ENCODE measurements at regions of chr2 and their contacts with region 1.

Region 1: DNA sequence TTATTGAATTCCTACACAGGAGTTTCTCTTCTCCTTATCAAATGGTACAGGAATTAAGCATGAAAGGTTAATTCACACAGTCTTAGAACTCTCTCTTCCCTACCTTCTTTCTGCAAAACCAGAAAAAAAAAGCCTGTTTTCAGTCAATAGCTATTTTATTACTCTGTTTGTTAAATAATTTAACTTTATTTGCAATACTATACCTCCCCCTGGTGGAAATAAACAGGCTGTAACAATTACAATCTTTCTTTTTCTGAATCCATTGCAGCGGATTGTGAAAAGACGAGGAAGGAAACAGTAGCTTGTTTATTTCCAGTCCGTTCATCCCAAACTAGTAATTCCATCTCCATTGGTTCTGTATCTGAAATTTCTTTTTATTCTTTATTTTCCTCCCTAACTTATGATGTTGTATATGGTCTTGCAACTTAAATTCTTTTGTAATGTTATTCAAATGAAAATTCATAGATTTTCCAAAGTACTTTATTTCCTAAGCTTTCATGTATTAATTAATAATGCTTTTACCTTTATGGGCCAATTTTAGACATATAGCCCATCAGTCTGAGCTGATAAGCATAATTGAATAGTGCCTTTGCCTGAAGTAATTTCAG is 165.2 kb downstream of the SH3BP4 start:
- DNase-seq: no peak
- H3K4me3 ChIP-seq: no peak overlapping the region
- H3K27ac ChIP-seq: no peak overlapping the region
- H3K4me1 ChIP-seq: no peaks in the 10 kb centered on the region
- H3K27me3 ChIP-seq: peaks cover 0 to 4% (median 0%) of the 10 kb centered on the region in 3 donors
- CTCF ChIP-seq: peak; percentile 40 to 65 (median 58)
- EP300 ChIP-seq: no peak
- POLR2A ChIP-seq: no peak

Region 2: GRCh38 chr2:234550511-234551107 is 566.4 kb before region 1 on chr2:
- intact Hi-C with region 1: loop called (anchors 1 kb)
- DNase-seq: peak; percentile 79
- H3K4me3 ChIP-seq: no peak overlapping the region
- H3K27ac ChIP-seq: no peak overlapping the region
- H3K4me1 ChIP-seq: no peaks in the 10 kb centered on the region
- H3K27me3 ChIP-seq: peaks cover 0 to 3% (median 0%) of the 10 kb centered on the region in 3 donors
- CTCF ChIP-seq: peak; percentile 89 to 96 (median 92)
- EP300 ChIP-seq: no peak
- POLR2A ChIP-seq: no peak